Activated CD4-positive, alpha-beta T cell treated with anti-CD3 and anti-CD28 coated beads for 36 hours (primary cell): ENCODE measurements at regions of chr12 and their contacts with region 1.

Region 1: GRCh38 chr12:54993161-54993835 is 8.7 kb upstream of the TESPA1 start:
- DNase-seq: peak; percentile 70
- ATAC-seq: peak; percentile 53
- H3K4me3 Mint-ChIP-seq: no peak overlapping the region
- H3K27ac Mint-ChIP-seq: no peak overlapping the region
- H3K4me1 Mint-ChIP-seq: peaks cover 43% of the 10 kb centered on the region
- H3K27me3 Mint-ChIP-seq: no peaks in the 10 kb centered on the region

Region 2: DNA sequence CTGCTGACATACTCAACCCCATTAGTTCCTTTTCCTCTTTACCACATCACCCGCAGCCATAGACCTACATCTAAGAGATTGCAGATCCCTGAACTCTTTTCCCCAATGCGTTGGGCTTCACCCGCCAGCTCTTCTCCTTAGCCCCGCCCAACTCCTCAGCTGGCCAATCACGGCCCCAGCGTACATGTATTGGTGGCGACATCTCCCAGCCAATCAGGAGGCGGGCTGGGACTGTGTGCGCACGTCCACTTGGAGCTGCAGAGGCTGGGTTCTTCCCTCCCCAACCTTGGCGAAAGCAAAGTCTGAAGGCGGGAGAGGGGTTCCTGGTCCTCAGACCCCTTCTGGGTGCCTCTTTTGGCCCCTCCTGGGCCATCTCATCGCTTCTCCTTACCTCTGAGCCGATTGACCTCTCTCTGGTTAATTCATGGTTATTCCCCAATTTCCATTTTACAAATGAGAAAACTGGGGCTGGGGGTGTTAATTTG is 432.9 kb before region 1 on chr12:
- CTCF ChIA-PET with region 1: no interaction called
- POLR2A ChIA-PET with region 1: no interaction called
- intact Hi-C with region 1: loop called in 1 of 2 experiments (anchors 5 kb)
- DNase-seq: peak; percentile 95
- ATAC-seq: peak; percentile 100
- H3K4me3 Mint-ChIP-seq: peak overlapping the region; percentile 66
- H3K27ac Mint-ChIP-seq: peak overlapping the region; percentile 93
- H3K4me1 Mint-ChIP-seq: peaks cover 33% of the 10 kb centered on the region
- H3K27me3 Mint-ChIP-seq: no peaks in the 10 kb centered on the region

Region 3: GRCh38 chr12:54853995-54854566 is 139.2 kb before region 1 on chr12 and contains the start of gene MUCL1:
- CTCF ChIA-PET with region 1: interaction called, 5 read pairs
- POLR2A ChIA-PET with region 1: no interaction called
- intact Hi-C with region 1: loop called (anchors 2 to 10 kb)
- DNase-seq: peak; percentile 82
- ATAC-seq: peak; percentile 95
- H3K4me3 Mint-ChIP-seq: no peak within 1 kb of the TSS
- H3K27ac Mint-ChIP-seq: no peak within 1 kb of the TSS
- H3K4me1 Mint-ChIP-seq: peaks cover 18% of the 10 kb centered on the region
- H3K27me3 Mint-ChIP-seq: no peaks in the 10 kb centered on the region
- total RNA-seq, gene MUCL1: not detected

Region 4: GRCh38 chr12:54879150-54879549 is 114.1 kb before region 1 on chr12:
- CTCF ChIA-PET with region 1: no interaction called
- POLR2A ChIA-PET with region 1: no interaction called
- intact Hi-C with region 1: no loop called
- DNase-seq: peak; percentile 40
- ATAC-seq: peak; percentile 55
- H3K4me3 Mint-ChIP-seq: no peak overlapping the region
- H3K27ac Mint-ChIP-seq: peak overlapping the region; percentile 88
- H3K4me1 Mint-ChIP-seq: peaks cover 11% of the 10 kb centered on the region
- H3K27me3 Mint-ChIP-seq: peaks cover 18% of the 10 kb centered on the region

Region 5: GRCh38 chr12:54891717-54892554 is 101.4 kb before region 1 on chr12:
- CTCF ChIA-PET with region 1: no interaction called
- POLR2A ChIA-PET with region 1: no interaction called
- intact Hi-C with region 1: no loop called
- DNase-seq: no peak
- ATAC-seq: no peak
- H3K4me3 Mint-ChIP-seq: no peak overlapping the region
- H3K27ac Mint-ChIP-seq: no peak overlapping the region
- H3K4me1 Mint-ChIP-seq: peaks cover 3% of the 10 kb centered on the region
- H3K27me3 Mint-ChIP-seq: peaks cover 7% of the 10 kb centered on the region

Region 6: DNA sequence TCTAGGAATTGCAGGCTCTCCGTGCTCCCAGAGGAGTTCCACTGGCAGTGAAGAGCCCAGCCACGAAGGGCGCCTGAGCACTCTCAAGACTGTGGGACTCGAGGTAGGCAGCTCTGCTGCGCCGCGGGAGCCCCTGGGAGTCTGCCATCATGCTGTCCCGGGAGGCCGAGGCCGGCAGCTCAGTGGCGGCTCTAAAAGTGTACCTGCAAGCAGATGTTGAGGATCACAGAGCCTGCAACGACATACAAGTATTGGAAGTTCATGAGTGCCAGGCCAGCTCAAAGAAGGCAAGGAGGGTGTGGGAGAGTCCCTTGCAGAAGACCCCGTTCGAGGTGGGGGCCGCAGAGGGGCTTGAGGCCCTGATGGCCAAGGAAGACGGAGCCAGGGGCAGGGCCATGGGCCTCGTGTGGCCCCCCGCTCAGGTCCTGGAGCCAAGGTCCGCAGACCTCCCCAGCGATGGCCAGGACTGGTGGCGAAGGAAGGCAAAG is 76.3 kb before region 1 on chr12:
- CTCF ChIA-PET with region 1: no interaction called
- POLR2A ChIA-PET with region 1: no interaction called
- intact Hi-C with region 1: no loop called
- DNase-seq: no peak
- ATAC-seq: no peak
- H3K4me3 Mint-ChIP-seq: no peak overlapping the region
- H3K27ac Mint-ChIP-seq: no peak overlapping the region
- H3K4me1 Mint-ChIP-seq: no peaks in the 10 kb centered on the region
- H3K27me3 Mint-ChIP-seq: no peaks in the 10 kb centered on the region

Region 7: DNA sequence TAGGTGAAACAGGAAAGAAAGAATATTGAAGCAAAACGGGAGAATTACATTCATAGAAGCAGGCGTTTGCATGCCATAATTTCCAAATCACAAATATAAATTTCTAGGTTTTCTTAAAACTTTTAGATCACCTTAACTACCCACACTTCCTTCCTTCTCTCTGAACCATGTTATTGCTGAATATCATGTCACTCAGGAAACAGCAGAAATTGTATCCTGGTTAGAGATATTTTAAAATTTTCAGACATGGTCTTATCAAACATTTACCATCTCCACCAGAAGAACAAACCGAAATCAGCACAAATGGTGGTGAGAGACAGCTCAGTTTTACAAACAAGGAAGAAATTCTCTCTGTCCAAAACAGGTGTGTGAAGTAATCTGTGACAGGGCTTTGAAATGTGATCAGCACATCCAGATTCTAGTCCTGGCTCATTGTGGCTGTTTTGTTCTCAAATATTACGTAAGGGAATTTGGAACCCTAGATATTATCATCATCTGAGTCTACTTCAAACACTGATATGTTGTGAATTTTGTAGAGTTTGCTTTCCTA is 25.0 kb before region 1 on chr12:
- CTCF ChIA-PET with region 1: interaction called, 10 read pairs
- POLR2A ChIA-PET with region 1: no interaction called
- intact Hi-C with region 1: no loop called
- DNase-seq: no peak
- ATAC-seq: no peak
- H3K4me3 Mint-ChIP-seq: no peak overlapping the region
- H3K27ac Mint-ChIP-seq: peak overlapping the region; percentile 58
- H3K4me1 Mint-ChIP-seq: peaks cover 60% of the 10 kb centered on the region
- H3K27me3 Mint-ChIP-seq: no peaks in the 10 kb centered on the region

Region 8: DNA sequence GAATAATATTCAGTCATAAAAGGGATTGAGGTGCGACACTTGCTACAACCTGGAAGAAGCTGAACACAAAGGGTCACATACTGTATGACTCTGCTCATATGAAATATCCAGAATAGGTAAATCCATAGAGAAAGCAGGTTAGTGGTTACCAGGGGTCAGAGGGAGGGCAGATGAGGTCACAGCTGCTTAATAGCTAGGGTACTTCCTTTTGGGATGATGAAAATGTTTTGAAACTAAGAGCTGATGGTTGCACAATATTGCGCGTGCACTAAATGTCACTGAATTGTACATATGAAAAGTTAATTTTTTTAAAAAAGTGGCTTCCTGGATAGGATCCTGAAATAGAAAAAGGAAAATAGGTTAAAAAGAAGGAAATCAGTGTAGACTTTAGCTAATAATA is 50.2 kb after region 1 on chr12:
- CTCF ChIA-PET with region 1: interaction called, 13 read pairs
- POLR2A ChIA-PET with region 1: no interaction called
- intact Hi-C with region 1: no loop called
- DNase-seq: no peak
- ATAC-seq: no peak
- H3K4me3 Mint-ChIP-seq: no peak overlapping the region
- H3K27ac Mint-ChIP-seq: no peak overlapping the region
- H3K4me1 Mint-ChIP-seq: peaks cover 6% of the 10 kb centered on the region
- H3K27me3 Mint-ChIP-seq: peaks cover 3% of the 10 kb centered on the region

Region 9: DNA sequence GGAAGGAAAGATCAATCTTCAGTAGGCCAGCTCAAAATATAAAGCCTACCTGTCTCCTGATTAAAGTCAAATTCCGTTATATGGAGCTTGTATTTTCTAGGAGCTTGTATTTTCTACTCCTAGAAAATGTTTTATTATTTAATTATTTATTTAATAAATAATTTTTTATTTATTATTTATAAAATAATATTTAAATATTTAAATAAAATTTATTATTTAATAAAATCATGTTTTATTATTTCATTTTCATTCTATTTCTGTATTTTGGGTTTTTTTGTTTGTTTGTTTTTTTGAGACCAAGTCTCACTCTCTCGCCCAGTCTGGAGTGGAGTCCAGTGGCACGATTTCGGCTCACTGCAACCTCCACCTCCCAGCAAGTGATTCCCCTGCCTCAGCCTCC is 379.2 kb after region 1 on chr12:
- CTCF ChIA-PET with region 1: no interaction called
- POLR2A ChIA-PET with region 1: no interaction called
- intact Hi-C with region 1: no loop called
- DNase-seq: no peak
- ATAC-seq: no peak
- H3K4me3 Mint-ChIP-seq: no peak overlapping the region
- H3K27ac Mint-ChIP-seq: no peak overlapping the region
- H3K4me1 Mint-ChIP-seq: no peaks in the 10 kb centered on the region
- H3K27me3 Mint-ChIP-seq: peaks cover 7% of the 10 kb centered on the region

Region 10: GRCh38 chr12:55629058-55629841 is 636.0 kb after region 1 on chr12:
- CTCF ChIA-PET with region 1: no interaction called
- POLR2A ChIA-PET with region 1: no interaction called
- intact Hi-C with region 1: loop called (anchors 5 to 10 kb)
- DNase-seq: peak; percentile 47
- ATAC-seq: peak; percentile 78
- H3K4me3 Mint-ChIP-seq: peak overlapping the region; percentile 7
- H3K27ac Mint-ChIP-seq: peak overlapping the region; percentile 57
- H3K4me1 Mint-ChIP-seq: peaks cover 21% of the 10 kb centered on the region
- H3K27me3 Mint-ChIP-seq: peaks cover 24% of the 10 kb centered on the region